ENCODE measurements at regions of chr1 and their contacts with region 1.

Region 1: GRCh38 chr1:47179017-47179987 is 10.5 kb downstream of the PDZK1IP1 start:
- DNase-seq: peak; percentile 85 to 94 (median 92)
- ATAC-seq: peak; percentile 83 to 94 (median 92)
- H3K4me3 ChIP-seq: peak overlapping the region; percentile 6 to 61 (median 45)
- H3K27ac ChIP-seq: no peak overlapping the region
- H3K4me1 ChIP-seq: peaks cover 3 to 16% (median 10%) of the 10 kb centered on the region in 12 donors
- H3K27me3 ChIP-seq: peaks cover 0 to 22% (median 5%) of the 10 kb centered on the region in 9 donors
- CTCF ChIP-seq: peak; percentile 85 to 96 (median 91)
- POLR2A ChIP-seq: peak in 1 of 2 donors; percentile 15

Region 2: DNA sequence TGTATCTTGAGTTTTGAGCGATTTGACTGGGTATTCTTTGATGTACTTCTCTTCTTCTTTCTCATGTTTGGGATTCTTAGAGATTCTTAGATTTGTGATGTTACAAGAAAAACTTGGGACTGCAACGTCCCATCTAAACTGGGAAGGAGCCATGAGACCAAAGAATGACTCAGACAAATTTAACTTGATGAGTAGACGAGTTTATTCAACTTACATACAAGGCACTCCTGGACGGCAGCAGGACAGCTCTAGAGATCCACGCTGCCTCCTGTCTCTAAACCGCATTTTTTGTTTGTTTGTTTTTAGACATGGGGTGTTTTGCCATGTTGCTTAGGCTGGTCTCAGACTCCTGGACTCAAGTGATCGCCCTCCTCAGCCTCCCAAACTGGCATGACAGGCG is 1184.0 kb before region 1 on chr1:
- intact Hi-C with region 1: no loop called
- DNase-seq: no peak
- ATAC-seq: no peak
- H3K4me3 ChIP-seq: no peak overlapping the region
- H3K27ac ChIP-seq: no peak overlapping the region
- H3K4me1 ChIP-seq: peaks cover 0 to 15% (median 3%) of the 10 kb centered on the region in 12 donors
- H3K27me3 ChIP-seq: no peaks in the 10 kb centered on the region
- CTCF ChIP-seq: no peak
- POLR2A ChIP-seq: no peak

Region 3: GRCh38 chr1:46352363-46352762 is 826.9 kb before region 1 on chr1:
- intact Hi-C with region 1: no loop called
- DNase-seq: no peak
- ATAC-seq: no peak
- H3K4me3 ChIP-seq: no peak overlapping the region
- H3K27ac ChIP-seq: no peak overlapping the region
- H3K4me1 ChIP-seq: peaks cover 0 to 9% (median 0%) of the 10 kb centered on the region in 12 donors
- H3K27me3 ChIP-seq: no peaks in the 10 kb centered on the region
- CTCF ChIP-seq: no peak
- POLR2A ChIP-seq: no peak

Region 4: GRCh38 chr1:46747683-46748288 is 431.5 kb before region 1 on chr1:
- intact Hi-C with region 1: loop called in 8 of 10 experiments (anchors 5 to 10 kb)
- DNase-seq: peak in 4 of 5 donors; percentile 21 to 48 (median 34)
- ATAC-seq: peak; percentile 73 to 93 (median 89)
- H3K4me3 ChIP-seq: no peak overlapping the region
- H3K27ac ChIP-seq: no peak overlapping the region
- H3K4me1 ChIP-seq: peaks cover 0 to 2% (median 0%) of the 10 kb centered on the region in 12 donors
- H3K27me3 ChIP-seq: peaks cover 0 to 9% (median 0%) of the 10 kb centered on the region in 9 donors
- CTCF ChIP-seq: peak; percentile 48 to 78 (median 74)
- POLR2A ChIP-seq: no peak

Region 5: GRCh38 chr1:47298025-47298699 is 118.9 kb after region 1 on chr1:
- intact Hi-C with region 1: loop called in 1 of 10 experiments (anchors 1 kb)
- DNase-seq: no peak
- ATAC-seq: peak; percentile 58 to 91 (median 66)
- H3K4me3 ChIP-seq: peak overlapping the region in 3 of 12 donors; percentile 9 to 16 (median 13)
- H3K27ac ChIP-seq: peak overlapping the region; percentile 35 to 84 (median 73)
- H3K4me1 ChIP-seq: peaks cover 0 to 23% (median 9%) of the 10 kb centered on the region in 12 donors
- H3K27me3 ChIP-seq: no peaks in the 10 kb centered on the region
- CTCF ChIP-seq: no peak
- POLR2A ChIP-seq: no peak

Region 6: DNA sequence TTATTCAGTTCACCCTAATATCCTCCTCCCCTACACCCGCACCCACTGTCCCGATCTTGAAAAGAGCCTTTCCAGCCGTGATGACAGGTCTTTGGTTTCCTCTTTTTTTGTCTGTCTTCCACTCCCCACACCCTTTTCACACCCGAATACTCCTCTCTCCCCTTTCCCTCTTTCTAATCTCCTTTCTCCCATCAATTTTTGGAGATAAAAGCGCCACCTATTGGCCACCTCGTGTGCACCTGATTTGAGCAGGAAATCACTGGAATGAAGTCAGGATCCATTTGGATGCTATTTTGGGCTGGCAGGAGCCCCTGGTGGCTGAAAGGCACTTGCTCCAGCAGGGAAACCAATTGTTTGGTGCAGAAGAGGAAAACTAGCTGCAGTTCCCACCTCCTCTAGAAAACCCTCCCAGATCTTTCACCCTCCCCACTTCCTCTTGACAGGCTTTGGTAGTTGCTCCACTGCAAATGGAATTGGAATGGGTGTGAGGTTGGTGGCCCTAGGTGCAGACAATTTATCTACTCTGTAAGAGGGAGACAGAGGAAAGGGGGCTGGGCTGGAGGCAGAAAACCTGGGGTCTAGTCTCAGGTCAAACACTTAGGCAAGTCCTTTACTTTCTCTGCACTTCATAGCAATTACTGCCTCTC is 245.2 kb after region 1 on chr1:
- intact Hi-C with region 1: loop called in 8 of 10 experiments (anchors 2 to 10 kb)
- DNase-seq: no peak
- ATAC-seq: no peak
- H3K4me3 ChIP-seq: no peak overlapping the region
- H3K27ac ChIP-seq: no peak overlapping the region
- H3K4me1 ChIP-seq: peaks cover 0 to 7% (median 0%) of the 10 kb centered on the region in 12 donors
- H3K27me3 ChIP-seq: peaks cover 0 to 43% (median 21%) of the 10 kb centered on the region in 9 donors
- CTCF ChIP-seq: peak; percentile 45 to 78 (median 59)
- POLR2A ChIP-seq: no peak

Region 7: DNA sequence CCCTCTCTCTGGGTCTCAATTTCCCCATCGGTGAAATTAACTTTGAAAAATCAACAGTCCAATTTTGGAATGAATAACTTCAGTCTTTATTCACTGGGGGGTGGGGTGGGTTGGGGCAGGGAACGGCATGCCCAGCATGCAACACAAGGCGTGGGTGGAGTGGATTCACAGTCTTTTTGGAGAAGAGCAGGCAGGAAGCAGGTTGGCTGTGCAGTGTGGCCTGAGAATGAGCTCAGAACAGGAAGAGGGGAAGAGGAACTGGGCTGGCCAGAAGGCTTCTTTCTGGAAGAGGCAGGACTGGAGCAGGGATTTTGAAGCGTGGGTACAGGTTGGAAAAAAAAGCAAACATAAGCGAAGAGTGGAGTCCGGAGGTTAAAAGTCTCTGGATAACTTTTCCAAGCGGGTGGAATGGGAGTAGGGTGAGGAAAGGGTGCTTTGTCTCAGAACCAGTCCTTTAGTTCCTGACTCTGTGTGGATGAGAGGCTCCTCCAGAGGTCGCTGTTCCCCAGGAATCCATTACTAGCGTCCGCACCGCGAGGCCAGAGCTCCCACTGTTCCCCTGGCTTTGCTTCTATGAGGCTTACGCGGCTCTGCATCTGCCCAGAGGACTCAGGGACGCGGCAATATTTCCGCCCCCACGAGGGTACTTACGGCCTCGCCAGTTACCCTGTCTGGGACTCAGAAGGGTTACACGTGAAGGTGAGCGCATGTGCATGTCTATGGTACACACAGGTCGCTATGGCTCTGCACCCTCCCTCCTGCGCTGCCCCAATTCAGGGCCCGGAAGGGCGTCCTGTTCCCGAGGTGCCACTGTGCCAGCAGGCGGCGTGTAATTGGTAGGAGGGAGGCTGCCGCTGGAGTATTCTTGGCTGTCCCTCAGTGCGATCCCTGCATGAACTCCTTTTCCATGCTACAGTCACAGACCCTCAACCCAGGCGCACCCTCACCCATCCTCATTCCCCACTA is 253.1 kb after region 1 on chr1:
- intact Hi-C with region 1: loop called in 2 of 10 experiments (anchors 5 to 10 kb)
- DNase-seq: peak; percentile 68 to 85 (median 73)
- ATAC-seq: peak; percentile 76 to 83 (median 79)
- H3K4me3 ChIP-seq: peak overlapping the region in 5 of 12 donors; percentile 22 to 42 (median 30)
- H3K27ac ChIP-seq: peak overlapping the region in 1 of 12 donors; percentile 40
- H3K4me1 ChIP-seq: peaks cover 4 to 50% (median 27%) of the 10 kb centered on the region in 12 donors
- H3K27me3 ChIP-seq: peaks cover 18 to 100% (median 76%) of the 10 kb centered on the region in 9 donors
- CTCF ChIP-seq: peak; percentile 54 to 83 (median 74)
- POLR2A ChIP-seq: no peak

Region 8: DNA sequence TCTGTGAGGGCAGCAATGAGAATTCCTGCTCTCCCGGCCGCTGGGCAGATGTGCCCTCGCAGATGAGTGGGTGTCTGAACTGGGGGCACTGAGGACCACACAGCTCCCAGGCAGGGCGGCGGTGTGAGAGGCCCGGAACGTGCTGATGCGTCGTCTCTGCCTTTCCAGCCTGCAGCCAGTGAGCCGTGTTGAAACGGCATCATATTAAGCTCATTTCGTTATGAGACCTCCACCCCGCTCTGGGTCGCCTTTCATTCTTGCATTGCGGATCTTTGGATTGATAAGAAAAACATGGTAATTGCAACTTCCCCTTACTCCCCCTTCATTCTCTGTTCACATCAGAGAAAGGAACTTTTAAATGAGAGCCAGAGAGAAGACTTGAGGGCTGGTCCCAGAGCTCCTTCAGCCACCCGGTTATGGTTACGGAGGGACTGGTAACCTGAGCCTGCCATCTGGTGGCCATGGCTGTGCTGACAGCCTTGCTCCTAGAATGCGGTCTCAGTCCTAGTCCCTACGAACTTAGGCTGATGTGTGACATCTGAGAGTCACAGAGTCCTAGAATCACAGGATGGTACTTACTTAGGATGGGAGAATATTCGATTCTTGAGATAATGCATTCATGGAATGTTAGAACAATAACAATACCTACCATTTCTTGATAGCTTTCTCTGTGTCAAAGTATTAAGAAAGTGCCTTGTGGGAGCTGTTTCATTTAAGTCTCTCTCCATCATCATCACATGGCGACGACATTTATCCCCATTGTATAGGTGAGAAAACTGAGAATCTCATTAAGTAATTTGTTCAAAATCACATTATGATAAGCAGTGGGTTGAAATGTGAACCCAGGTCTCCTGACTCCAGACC is 546.9 kb after region 1 on chr1:
- intact Hi-C with region 1: loop called in 3 of 10 experiments (anchors 5 to 10 kb)
- DNase-seq: peak; percentile 68 to 79 (median 72)
- ATAC-seq: peak; percentile 82 to 93 (median 88)
- H3K4me3 ChIP-seq: peak overlapping the region in 8 of 12 donors; percentile 8 to 35 (median 30)
- H3K27ac ChIP-seq: no peak overlapping the region
- H3K4me1 ChIP-seq: peaks cover 0 to 17% (median 13%) of the 10 kb centered on the region in 12 donors
- H3K27me3 ChIP-seq: peaks cover 15 to 48% (median 28%) of the 10 kb centered on the region in 9 donors
- CTCF ChIP-seq: peak; percentile 80 to 96 (median 84)
- POLR2A ChIP-seq: no peak

Region 9: GRCh38 chr1:48227165-48228013 is 1048.1 kb after region 1 on chr1:
- intact Hi-C with region 1: loop called in 1 of 10 experiments (anchors 10 kb)
- DNase-seq: no peak
- ATAC-seq: peak in 3 of 4 donors; percentile 31 to 53 (median 32)
- H3K4me3 ChIP-seq: no peak overlapping the region
- H3K27ac ChIP-seq: no peak overlapping the region
- H3K4me1 ChIP-seq: peaks cover 0 to 17% (median 0%) of the 10 kb centered on the region in 12 donors
- H3K27me3 ChIP-seq: peaks cover 0 to 5% (median 0%) of the 10 kb centered on the region in 9 donors
- CTCF ChIP-seq: no peak
- POLR2A ChIP-seq: no peak

Measured in heart left ventricle (tissue), 16 donors.